K562 (cell line): ENCODE measurements at regions of chr19 and their contacts with region 1.

Region 1: DNA sequence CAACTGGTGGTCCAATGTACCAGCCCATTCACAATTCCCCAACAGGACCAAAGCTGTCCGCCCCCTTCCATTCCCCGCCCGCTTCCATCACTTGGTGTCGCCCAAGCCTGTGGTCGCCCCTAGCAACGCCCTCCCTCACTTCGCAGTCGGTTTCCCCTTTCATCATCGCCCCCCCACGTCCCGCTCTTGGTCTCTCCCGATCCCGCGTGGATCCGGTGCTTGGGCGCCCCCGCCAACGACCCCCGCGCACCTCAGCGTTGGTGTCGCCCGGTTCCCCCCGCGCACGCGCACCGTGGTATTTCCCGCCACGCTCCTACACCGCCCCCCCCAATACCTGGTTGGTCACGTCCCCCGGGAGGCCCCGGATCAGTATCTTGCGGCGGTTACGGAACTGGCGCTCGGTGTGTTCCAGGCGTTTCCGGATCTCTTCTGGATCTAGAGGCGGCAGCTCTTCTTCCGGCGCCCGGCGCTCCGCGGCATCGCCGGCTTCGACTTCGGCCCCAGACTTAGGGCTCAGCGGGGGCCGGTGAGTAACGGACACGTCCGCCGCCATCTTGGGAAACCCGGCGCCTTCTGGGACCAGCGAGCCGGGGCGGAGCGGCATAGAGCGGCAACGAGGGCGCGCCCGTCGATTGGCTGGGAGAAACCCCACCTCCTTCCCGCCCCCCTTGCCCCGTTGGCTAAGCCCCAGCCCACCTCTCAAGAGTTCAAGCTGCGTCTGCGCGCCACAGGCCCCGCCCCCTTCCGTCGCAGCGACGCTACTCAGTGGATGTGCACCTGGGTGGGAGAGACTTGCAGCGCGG is at the start of gene RAVER1:
- DNase-seq: peak; percentile 96 to 99 (median 98)
- ATAC-seq: peak; percentile 91
- H3K4me3 ChIP-seq: peak within 1 kb of the TSS; percentile 93
- H3K27ac ChIP-seq: peak within 1 kb of the TSS; percentile 98
- H3K4me1 ChIP-seq: peaks cover 15 to 54% of the 10 kb centered on the region in 2 experiments; a peak in 4 of 5 replicates
- H3K27me3 ChIP-seq: no peaks in the 10 kb centered on the region
- CTCF ChIP-seq: no peak
- EP300 ChIP-seq: no peak; the same call in 1 of the 2 replicates
- POLR2A ChIP-seq: peak; percentile 98
- RAD21 ChIP-seq: 0 out of 4 replicates have a peak, but pooled peaks of 1 of the 2 experiments have one; percentile 3
- polyA plus RNA-seq, gene RAVER1: 0.06 to 0.08 TPM

Region 2: GRCh38 chr19:10269333-10270179 is 63.6 kb before region 1 on chr19:
- CTCF ChIA-PET with region 1: no interaction called
- POLR2A ChIA-PET with region 1: interaction called, 5 read pairs
- in situ Hi-C with region 1: no loop called
- intact Hi-C with region 1: loop called (anchors 1 kb)
- DNase-seq: peak; percentile 80 to 91 (median 86)
- ATAC-seq: peak; percentile 80
- H3K4me3 ChIP-seq: peak overlapping the region; percentile 48
- H3K27ac ChIP-seq: peak overlapping the region; percentile 81
- H3K4me1 ChIP-seq: peaks cover 16 to 33% of the 10 kb centered on the region in 2 experiments; a peak in 4 of 5 replicates
- H3K27me3 ChIP-seq: no peaks in the 10 kb centered on the region
- CTCF ChIP-seq: peak; percentile 94 to 98 (median 95)
- EP300 ChIP-seq: no peak
- POLR2A ChIP-seq: no peak
- RAD21 ChIP-seq: peak; percentile 98 to 99

Region 3: GRCh38 chr19:10315335-10316214 is 17.6 kb before region 1 on chr19 and contains the start of gene FDX2:
- CTCF ChIA-PET with region 1: no interaction called
- POLR2A ChIA-PET with region 1: interaction called, 11 read pairs
- in situ Hi-C with region 1: no loop called
- intact Hi-C with region 1: loop called (anchors 1 kb)
- DNase-seq: peak; percentile 89 to 91 (median 90)
- ATAC-seq: peak; percentile 90
- H3K4me3 ChIP-seq: peak within 1 kb of the TSS; percentile 82
- H3K27ac ChIP-seq: peak within 1 kb of the TSS; percentile 73
- H3K4me1 ChIP-seq: peaks cover 20 to 48% of the 10 kb centered on the region in 2 experiments
- H3K27me3 ChIP-seq: no peaks in the 10 kb centered on the region
- CTCF ChIP-seq: no peak
- EP300 ChIP-seq: no peak
- POLR2A ChIP-seq: peak; percentile 87
- RAD21 ChIP-seq: no peak
- polyA plus RNA-seq, gene FDX2: 2.5 to 5.8 TPM

Region 4: GRCh38 chr19:10380313-10381102 is 47.4 kb after region 1 on chr19 and contains the start of gene TYK2:
- CTCF ChIA-PET with region 1: no interaction called
- POLR2A ChIA-PET with region 1: interaction called, 9 read pairs
- in situ Hi-C with region 1: no loop called
- intact Hi-C with region 1: loop called (anchors 2 kb)
- DNase-seq: peak; percentile 99 to 100 (median 100)
- ATAC-seq: peak; percentile 98
- H3K4me3 ChIP-seq: peak within 1 kb of the TSS; percentile 91
- H3K27ac ChIP-seq: peak within 1 kb of the TSS; percentile 96
- H3K4me1 ChIP-seq: peaks cover 8 to 18% of the 10 kb centered on the region in 2 experiments; a peak in 4 of 5 replicates
- H3K27me3 ChIP-seq: no peaks in the 10 kb centered on the region
- CTCF ChIP-seq: no peak
- EP300 ChIP-seq: no peak
- POLR2A ChIP-seq: peak; percentile 98
- RAD21 ChIP-seq: no peak; a peak in 1 of 4 replicates
- polyA plus RNA-seq, gene TYK2: 15.0 to 19.9 TPM

Region 5: DNA sequence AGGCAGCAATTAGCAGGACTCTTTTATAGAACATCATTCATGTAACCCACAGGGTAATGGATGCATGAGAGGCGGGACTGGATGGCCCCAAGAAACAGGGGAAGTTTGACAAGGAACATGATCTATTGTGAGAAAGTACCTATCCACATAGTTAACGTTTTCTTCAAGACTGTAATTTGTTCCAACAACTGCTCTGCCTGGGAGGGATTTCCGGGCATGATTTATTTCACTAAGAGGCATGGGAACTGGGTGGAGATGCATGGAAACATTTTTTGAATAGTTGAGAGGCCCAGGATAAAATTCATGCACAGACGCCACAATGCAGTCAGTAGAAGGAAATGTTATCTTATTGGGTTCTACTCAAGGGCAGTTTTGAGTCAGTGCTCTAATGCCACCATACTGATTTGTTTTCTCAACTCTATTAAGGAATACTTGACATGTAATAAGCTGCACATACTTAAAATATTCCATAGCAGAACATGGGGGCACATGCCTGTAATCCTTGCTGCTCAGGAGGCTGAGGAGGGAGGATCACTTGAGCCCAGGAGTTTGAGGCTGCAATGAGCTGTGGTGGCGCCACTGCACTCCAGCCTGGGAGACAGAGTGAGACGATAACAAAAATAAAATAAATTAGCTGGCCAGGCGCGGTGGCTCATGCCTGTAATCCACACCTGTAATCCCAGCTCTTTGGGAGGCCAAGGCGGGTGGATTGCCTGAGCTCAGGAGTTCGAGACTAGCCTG is 200.7 kb after region 1 on chr19:
- CTCF ChIA-PET with region 1: no interaction called
- POLR2A ChIA-PET with region 1: no interaction called
- in situ Hi-C with region 1: no loop called
- intact Hi-C with region 1: no loop called
- DNase-seq: no peak
- ATAC-seq: no peak
- H3K4me3 ChIP-seq: no peak overlapping the region
- H3K27ac ChIP-seq: no peak overlapping the region
- H3K4me1 ChIP-seq: peaks cover 0 to 6% of the 10 kb centered on the region in 2 experiments; a peak in 3 of 5 replicates
- H3K27me3 ChIP-seq: no peaks in the 10 kb centered on the region; a peak in 1 of 5 replicates
- CTCF ChIP-seq: no peak
- EP300 ChIP-seq: no peak
- POLR2A ChIP-seq: no peak
- RAD21 ChIP-seq: no peak